ENCODE measurements at regions of chr3 and their contacts with region 1.

Region 1: DNA sequence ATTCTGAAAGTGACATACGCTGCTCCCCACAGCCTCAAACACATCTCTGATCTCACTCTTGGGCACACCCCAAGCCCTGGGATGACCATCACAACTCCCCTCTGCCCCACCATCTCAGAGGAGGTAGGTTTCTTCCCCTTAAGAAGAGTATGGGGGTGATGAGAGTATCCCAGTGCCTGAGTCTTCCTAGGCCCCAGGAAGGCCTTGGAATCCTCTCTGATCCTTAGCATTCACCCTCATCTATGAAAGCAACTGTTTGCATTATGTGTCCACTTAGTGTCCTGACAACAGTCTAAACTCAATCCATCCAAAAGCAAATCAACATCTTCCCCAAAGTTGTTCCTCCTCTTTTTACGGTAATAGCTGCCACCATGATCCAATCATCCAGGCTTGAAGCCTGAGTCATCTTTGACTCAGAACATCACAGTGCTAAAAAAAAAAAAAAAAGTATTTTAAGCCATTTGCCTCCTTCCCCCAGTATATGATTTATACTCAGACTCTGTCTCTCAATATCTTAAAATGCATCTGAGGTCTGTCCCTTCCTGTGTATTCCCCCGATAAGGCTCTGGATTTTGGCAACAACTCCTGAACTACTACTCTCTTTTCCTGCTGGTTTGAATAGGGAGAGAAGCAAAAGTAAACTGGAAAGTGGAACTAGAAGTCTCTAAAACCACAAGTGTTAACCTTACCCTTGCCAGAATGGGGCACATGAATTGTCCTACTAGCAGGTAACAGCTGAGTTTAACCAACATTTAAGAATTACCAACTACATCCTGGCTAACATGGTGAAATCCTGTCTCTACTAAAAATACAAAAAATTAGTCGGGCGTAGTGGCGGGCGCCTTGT is 22.5 kb downstream of the POPDC2 start:
- DNase-seq: no peak
- ATAC-seq: peak; percentile 64 to 77 (median 68)
- H3K4me3 ChIP-seq: peak overlapping the region; percentile 47
- H3K27ac ChIP-seq: peak overlapping the region; percentile 97
- H3K4me1 ChIP-seq: peaks cover 40% of the 10 kb centered on the region
- H3K27me3 ChIP-seq: no peaks in the 10 kb centered on the region
- CTCF ChIP-seq: no peak

Region 2: DNA sequence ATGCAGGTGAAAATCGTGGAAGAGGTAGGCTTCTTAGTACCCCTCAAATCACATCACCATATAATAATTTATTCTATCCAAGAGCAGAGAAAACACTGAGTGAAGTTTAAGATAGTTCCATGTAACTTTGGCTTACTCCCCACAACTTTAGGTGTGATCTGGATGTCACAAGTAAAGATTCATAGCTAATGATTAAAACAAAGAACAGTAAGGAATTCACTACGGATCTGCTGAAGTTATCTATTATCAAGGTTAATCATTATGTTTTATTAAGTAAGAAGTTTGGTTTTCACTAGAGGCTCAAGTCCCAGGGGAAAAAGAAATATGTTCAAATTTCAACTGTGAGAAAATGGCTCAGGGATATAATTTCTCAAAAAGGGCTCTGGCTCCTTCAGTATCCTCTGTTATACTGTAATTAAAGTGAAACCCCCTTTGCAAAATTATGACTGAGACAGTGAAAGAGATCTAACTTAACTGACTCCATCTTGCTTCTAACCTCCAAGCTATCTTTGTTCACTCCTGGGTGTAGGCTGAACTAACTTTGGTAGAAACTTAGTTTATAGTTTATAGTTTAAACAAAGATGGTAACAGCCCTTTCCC is 95.6 kb before region 1 on chr3:
- intact Hi-C with region 1: no loop called
- DNase-seq: no peak
- ATAC-seq: no peak
- H3K4me3 ChIP-seq: no peak overlapping the region
- H3K27ac ChIP-seq: no peak overlapping the region
- H3K4me1 ChIP-seq: no peaks in the 10 kb centered on the region
- H3K27me3 ChIP-seq: no peaks in the 10 kb centered on the region
- CTCF ChIP-seq: no peak

Region 3: GRCh38 chr3:119598410-119599098 is 39.3 kb before region 1 on chr3:
- intact Hi-C with region 1: loop called in 1 of 2 experiments (anchors 5 kb)
- DNase-seq: no peak
- ATAC-seq: no peak
- H3K4me3 ChIP-seq: peak overlapping the region; percentile 33
- H3K27ac ChIP-seq: peak overlapping the region; percentile 92
- H3K4me1 ChIP-seq: peaks cover 47% of the 10 kb centered on the region
- H3K27me3 ChIP-seq: no peaks in the 10 kb centered on the region
- CTCF ChIP-seq: no peak

Region 4: DNA sequence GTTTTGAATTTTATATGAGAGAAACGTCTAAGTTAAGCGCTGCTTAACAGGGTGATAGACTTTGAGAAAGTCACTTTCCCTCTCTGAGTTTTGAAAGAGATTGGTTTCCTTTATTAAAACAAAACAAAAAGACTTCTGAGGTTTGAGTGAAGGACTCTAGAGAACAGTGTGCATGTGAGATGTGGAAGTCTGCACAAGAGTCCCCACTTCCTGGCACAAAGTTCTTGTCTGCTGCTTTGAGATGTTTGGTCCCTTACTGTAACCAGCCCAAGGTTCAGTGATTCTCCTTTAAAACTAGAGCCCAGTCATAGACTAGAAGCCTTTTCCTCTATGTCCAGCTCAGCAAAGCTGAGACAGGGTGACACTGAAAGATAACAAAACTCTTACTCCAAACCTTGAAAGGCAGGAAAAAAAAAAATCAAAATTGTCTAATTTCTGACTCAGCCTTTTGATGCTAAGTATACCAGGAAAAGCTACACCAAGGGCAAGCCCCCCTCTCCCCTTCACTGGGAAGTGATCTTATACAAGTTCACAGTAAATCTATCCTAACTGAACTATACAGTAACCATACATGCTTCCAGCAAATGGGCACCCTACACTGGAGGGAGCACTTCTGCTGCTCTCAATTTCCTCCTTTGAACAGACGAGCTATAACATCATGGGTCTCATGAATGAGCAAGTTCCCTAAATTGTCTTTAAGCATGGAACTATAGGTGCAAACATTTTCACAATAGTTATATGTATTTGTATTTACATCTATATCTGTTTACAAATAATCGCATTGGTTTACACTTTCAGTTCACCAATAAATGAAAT is 20.2 kb after region 1 on chr3:
- intact Hi-C with region 1: loop called in 1 of 2 experiments (anchors 2 kb)
- DNase-seq: no peak
- ATAC-seq: no peak
- H3K4me3 ChIP-seq: peak overlapping the region; percentile 71
- H3K27ac ChIP-seq: peak overlapping the region; percentile 97
- H3K4me1 ChIP-seq: peaks cover 44% of the 10 kb centered on the region
- H3K27me3 ChIP-seq: no peaks in the 10 kb centered on the region
- CTCF ChIP-seq: no peak